Activated CD4-positive, alpha-beta T cell treated with anti-CD3 and anti-CD28 coated beads, Interleukin-2, amount 10 ng/mL, durations not matched to agents 24 days and 14 days (primary cell): ENCODE measurements at regions of chr20 and their contacts with region 1.

Region 1: DNA sequence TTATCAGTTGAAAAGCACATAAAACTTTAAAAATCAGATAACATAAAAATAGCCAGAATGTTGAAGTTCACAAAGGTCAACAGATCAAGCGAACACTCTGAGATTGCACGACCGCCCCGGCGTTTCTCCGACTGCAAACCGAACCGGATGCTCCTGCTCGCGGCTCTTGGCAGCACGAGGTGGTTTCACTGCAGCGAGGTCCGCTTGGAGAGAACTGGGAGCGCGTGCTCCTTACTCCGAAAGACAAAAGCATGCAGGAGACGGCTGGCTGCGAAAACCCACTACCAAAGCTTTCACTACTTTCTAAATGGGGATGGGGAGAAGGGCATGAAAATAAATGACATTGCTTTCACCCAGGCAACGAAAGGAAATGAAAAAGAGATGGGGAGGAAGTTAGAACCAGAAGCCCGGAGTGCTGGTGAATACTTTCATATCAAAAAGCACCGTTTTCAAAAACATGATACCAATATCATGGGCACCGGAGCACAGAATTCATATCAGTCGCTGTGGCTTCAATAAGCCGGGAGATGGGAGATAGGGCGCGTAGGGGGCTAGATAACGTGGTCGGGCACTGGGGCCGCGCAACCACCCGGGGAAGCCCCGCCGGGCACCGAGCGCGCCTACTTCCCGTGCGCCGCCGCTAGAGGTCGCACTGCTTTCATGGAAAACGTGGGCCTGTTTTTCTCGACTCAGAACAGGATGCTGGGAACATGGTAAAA is 8.3 kb upstream of the ANKRD60 start:
- DNase-seq: peak; percentile 96
- H3K4me3 Mint-ChIP-seq: peak overlapping the region; percentile 91
- H3K27ac Mint-ChIP-seq: peak overlapping the region; percentile 94
- H3K4me1 Mint-ChIP-seq: peaks cover 23% of the 10 kb centered on the region
- H3K27me3 Mint-ChIP-seq: no peaks in the 10 kb centered on the region

Region 2: GRCh38 chr20:58271606-58272402 is 35.0 kb after region 1 on chr20:
- intact Hi-C with region 1: loop called (anchors 1 kb)
- DNase-seq: no peak
- H3K4me3 Mint-ChIP-seq: no peak overlapping the region
- H3K27ac Mint-ChIP-seq: peak overlapping the region; percentile 7
- H3K4me1 Mint-ChIP-seq: peaks cover 35% of the 10 kb centered on the region
- H3K27me3 Mint-ChIP-seq: no peaks in the 10 kb centered on the region

Region 3: GRCh38 chr20:58388882-58389323 is 152.1 kb after region 1 on chr20 and contains the start of gene VAPB:
- intact Hi-C with region 1: loop called (anchors 5 kb)
- DNase-seq: peak; percentile 99
- H3K4me3 Mint-ChIP-seq: peak within 1 kb of the TSS; percentile 89
- H3K27ac Mint-ChIP-seq: peak within 1 kb of the TSS; percentile 93
- H3K4me1 Mint-ChIP-seq: peaks cover 30% of the 10 kb centered on the region
- H3K27me3 Mint-ChIP-seq: peaks cover 12% of the 10 kb centered on the region
- total RNA-seq, gene VAPB: 35.0 and 36.5 TPM in 2 replicates

Region 4: DNA sequence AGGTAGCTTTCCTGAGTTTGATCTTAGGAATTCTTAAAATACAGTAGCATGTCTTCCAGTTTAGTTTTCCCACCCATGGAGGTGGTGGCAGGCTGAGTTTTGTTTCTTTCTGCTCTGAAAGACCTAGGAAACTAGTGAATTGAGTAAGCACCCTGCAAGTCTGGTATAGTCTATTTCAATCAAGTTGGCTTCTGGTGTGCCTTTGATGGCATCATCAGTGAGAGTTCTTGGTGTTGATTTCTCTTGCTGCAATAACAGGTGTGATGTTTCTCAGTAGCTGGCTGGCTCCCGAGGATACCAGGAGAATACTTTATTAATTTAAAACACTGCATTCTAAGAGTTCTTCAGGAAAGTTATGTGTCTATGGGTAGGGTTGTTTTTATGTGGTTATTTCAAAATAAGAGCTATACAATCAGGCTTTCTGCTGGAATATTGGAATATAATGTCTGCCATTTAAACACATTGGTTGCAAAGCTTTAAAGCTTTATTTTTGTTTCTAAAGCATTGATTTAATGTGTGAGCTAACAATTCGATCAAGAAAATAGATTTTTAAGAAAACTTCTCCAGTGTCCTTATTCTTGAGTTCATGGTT is 171.3 kb after region 1 on chr20:
- intact Hi-C with region 1: loop called (anchors 2 kb)
- DNase-seq: peak; percentile 73
- H3K4me3 Mint-ChIP-seq: peak overlapping the region; percentile 50
- H3K27ac Mint-ChIP-seq: peak overlapping the region; percentile 51
- H3K4me1 Mint-ChIP-seq: peaks cover 31% of the 10 kb centered on the region
- H3K27me3 Mint-ChIP-seq: no peaks in the 10 kb centered on the region

Region 5: DNA sequence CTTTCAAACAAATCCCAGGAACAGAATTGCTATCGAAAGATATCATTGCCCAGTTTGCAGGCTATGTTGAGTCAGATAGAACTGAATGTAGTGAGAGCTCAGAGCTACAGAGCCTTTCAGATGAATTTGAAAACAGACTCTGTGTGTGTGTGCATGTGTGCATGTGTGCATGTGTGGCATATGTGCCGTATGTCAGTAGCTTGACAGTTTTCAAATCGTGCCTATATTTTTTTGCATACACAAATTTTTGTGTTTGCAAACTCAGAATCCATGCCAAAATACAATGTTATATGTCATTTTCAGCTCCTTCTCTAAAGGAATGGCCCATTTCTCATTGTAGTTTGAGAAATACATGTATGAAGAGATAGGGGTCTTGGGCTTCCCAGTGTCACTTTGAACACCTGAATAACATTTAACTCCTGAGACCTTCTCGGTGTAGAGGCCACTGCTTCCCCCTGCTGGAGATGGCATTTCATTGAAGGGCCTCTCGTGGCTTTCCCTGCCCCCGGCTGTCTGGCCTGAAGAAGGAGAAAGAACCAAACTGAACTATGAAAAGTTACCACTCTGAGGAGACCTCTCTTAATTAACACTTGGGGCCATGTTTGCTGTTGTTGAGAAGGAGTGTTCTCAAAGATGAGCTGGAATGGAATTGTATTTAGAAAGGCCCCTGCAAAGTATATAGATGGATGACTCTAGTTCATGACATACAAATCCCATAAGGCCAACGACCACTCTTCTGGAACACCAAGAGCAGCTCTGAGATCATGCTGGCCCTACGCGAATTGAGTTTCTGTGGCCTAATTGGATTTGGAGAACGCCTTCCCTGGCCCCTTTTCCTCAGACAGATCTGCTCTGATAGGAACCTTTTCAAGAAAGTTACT is 211.0 kb after region 1 on chr20:
- intact Hi-C with region 1: loop called (anchors 1 kb)
- DNase-seq: peak; percentile 88
- H3K4me3 Mint-ChIP-seq: no peak overlapping the region
- H3K27ac Mint-ChIP-seq: no peak overlapping the region
- H3K4me1 Mint-ChIP-seq: peaks cover 11% of the 10 kb centered on the region
- H3K27me3 Mint-ChIP-seq: no peaks in the 10 kb centered on the region

Region 6: DNA sequence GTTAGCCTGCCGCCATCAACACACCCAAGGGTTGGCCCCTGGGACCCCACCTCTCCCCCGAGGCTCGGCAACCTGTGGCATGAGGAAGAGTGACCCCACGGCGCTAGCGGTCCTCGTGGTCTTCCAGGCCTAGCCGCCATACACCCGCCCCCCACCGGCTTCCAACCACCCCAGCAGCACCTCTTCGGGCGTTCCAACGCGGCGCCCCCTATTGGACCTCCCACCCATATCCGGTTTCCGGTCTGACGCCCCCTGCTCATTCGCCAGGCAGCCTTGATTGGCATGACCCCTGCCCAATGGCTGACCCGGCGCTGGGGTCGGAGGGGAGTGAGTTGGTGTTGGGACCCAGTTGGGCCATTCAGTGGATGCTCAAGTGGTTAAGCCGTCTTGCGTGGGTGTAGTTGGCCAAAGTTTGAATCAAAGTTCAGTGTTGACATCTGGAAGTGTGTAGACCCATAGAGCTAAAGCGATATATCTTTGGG is 614.0 kb after region 1 on chr20 and contains the start of gene GNAS-AS1:
- intact Hi-C with region 1: loop called (anchors 5 kb)
- DNase-seq: peak; percentile 94
- H3K4me3 Mint-ChIP-seq: peak within 1 kb of the TSS; percentile 90
- H3K27ac Mint-ChIP-seq: no peak within 1 kb of the TSS
- H3K4me1 Mint-ChIP-seq: peaks cover 36% of the 10 kb centered on the region
- H3K27me3 Mint-ChIP-seq: peaks cover 57% of the 10 kb centered on the region
- total RNA-seq, gene GNAS-AS1: 0.64 and 1.6 TPM in 2 replicates